Thyroid gland (tissue), 4 donors: ENCODE measurements at regions of chr14 and their contacts with region 1.

Region 1: GRCh38 chr14:39174560-39175444 is at the start of gene PNN:
- DNase-seq: peak; percentile 97 to 98
- H3K4me3 ChIP-seq: peak within 1 kb of the TSS; percentile 51 to 75 (median 67)
- H3K27ac ChIP-seq: peak within 1 kb of the TSS; percentile 85 to 95 (median 94)
- H3K4me1 ChIP-seq: peaks cover 0 to 10% of the 10 kb centered on the region in 2 donors
- H3K27me3 ChIP-seq: no peaks in the 10 kb centered on the region
- CTCF ChIP-seq: peak in 1 of 6 experiments; percentile 2
- POLR2A ChIP-seq: peak in 1 of 2 donors; percentile 93
- total RNA-seq, gene PNN: 28.6 to 45.7 (median 43.1) TPM

Region 2: GRCh38 chr14:39025810-39026627 is 148.8 kb before region 1 on chr14:
- intact Hi-C with region 1: no loop called
- DNase-seq: no peak
- H3K4me3 ChIP-seq: no peak overlapping the region
- H3K27ac ChIP-seq: no peak overlapping the region
- H3K4me1 ChIP-seq: no peaks in the 10 kb centered on the region
- H3K27me3 ChIP-seq: no peaks in the 10 kb centered on the region
- CTCF ChIP-seq: no peak
- POLR2A ChIP-seq: no peak

Region 3: GRCh38 chr14:39114073-39114838 is 60.5 kb before region 1 on chr14 and contains the start of gene GEMIN2:
- intact Hi-C with region 1: loop called (anchors 5 kb)
- DNase-seq: peak; percentile 94 to 95
- H3K4me3 ChIP-seq: peak within 1 kb of the TSS; percentile 56 to 71 (median 59)
- H3K27ac ChIP-seq: peak within 1 kb of the TSS in 2 of 3 donors; percentile 69 to 78
- H3K4me1 ChIP-seq: peaks cover 6 to 8% of the 10 kb centered on the region in 2 donors
- H3K27me3 ChIP-seq: no peaks in the 10 kb centered on the region
- CTCF ChIP-seq: peak in 1 of 6 experiments; percentile 5
- POLR2A ChIP-seq: peak in 1 of 2 donors; percentile 70
- total RNA-seq, gene GEMIN2: 11.3 to 33.7 (median 18.2) TPM

Region 4: GRCh38 chr14:39426605-39427004 is 251.8 kb after region 1 on chr14:
- intact Hi-C with region 1: loop called (anchors 10 kb)
- DNase-seq: no peak
- H3K4me3 ChIP-seq: no peak overlapping the region
- H3K27ac ChIP-seq: no peak overlapping the region
- H3K4me1 ChIP-seq: peaks cover 29 to 42% of the 10 kb centered on the region in 2 donors
- H3K27me3 ChIP-seq: no peaks in the 10 kb centered on the region
- CTCF ChIP-seq: peak in 4 of 6 experiments; percentile 9 to 45 (median 34)
- POLR2A ChIP-seq: no peak